ENCODE measurements at regions of chr13 and their contacts with region 1.

Region 1: GRCh38 chr13:91946498-91947070 is 548.2 kb downstream of the GPC5 start:
- DNase-seq: peak; percentile 44
- ATAC-seq: peak; percentile 82
- H3K4me3 ChIP-seq: no peak overlapping the region
- H3K27ac ChIP-seq: no peak overlapping the region
- H3K4me1 ChIP-seq: no peaks in the 10 kb centered on the region
- H3K27me3 ChIP-seq: no peaks in the 10 kb centered on the region
- CTCF ChIP-seq: peak; percentile 70
- EP300 ChIP-seq: no peak
- POLR2A ChIP-seq: no peak
- RAD21 ChIP-seq: no peak

Region 2: DNA sequence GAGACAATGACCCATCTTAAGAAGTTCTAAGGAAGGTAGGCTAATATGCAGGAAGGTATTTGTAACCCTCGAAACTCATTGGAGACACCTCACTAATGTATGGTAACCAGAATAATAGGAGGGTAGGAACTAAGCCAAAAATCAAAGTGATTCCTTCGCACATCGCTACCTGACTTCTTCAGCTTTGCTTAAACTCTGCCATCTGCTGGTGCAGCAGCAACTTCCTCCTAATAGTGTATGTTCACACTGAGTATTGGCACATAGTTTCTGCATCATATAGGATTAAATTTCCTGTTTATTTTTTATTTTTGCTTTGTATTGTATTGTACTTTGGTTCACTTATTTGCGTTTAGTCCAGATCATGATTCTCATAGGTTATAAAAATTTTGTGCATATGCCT is 128.1 kb after region 1 on chr13:
- CTCF ChIA-PET with region 1: interaction called, 21 read pairs
- POLR2A ChIA-PET with region 1: no interaction called
- in situ Hi-C with region 1: loop called (anchors 10 kb)
- intact Hi-C with region 1: loop called (anchors 1 kb)
- DNase-seq: peak; percentile 28
- ATAC-seq: peak; percentile 82
- H3K4me3 ChIP-seq: no peak overlapping the region
- H3K27ac ChIP-seq: no peak overlapping the region
- H3K4me1 ChIP-seq: no peaks in the 10 kb centered on the region
- H3K27me3 ChIP-seq: no peaks in the 10 kb centered on the region; a peak in 1 of 5 replicates
- CTCF ChIP-seq: peak; percentile 55
- EP300 ChIP-seq: no peak
- POLR2A ChIP-seq: no peak
- RAD21 ChIP-seq: no peak; the same call in 1 of the 2 replicates

Region 3: DNA sequence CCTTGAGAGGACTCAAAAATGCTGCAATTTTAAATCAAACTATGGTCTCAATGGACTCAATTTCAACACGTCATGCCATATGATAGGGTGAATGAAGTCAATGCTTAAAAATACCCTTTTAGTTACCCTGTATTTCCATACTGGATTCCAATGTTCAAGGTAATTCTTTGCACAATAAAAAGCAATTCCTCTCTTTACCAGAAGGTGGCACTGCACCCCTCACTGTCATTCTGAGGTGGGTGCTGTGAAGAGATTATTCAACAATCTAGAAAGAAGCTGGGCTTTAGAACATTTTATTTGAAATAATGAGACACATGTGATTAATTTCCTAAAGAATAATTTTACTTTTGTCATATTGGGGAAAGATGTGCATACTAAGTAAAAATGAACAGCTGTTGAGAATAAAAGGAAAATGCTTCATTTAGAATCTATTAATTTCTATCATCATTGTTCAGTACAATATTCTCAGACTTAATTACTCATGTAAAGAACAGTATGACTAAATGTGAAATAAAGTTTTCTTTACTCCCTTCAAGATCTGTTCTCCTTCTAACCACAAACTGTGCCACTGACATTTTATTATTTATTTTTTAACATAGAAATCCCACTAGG is 240.9 kb after region 1 on chr13:
- CTCF ChIA-PET with region 1: no interaction called
- POLR2A ChIA-PET with region 1: no interaction called
- in situ Hi-C with region 1: no loop called
- intact Hi-C with region 1: loop called (anchors 10 kb)
- DNase-seq: peak; percentile 24
- ATAC-seq: peak; percentile 76
- H3K4me3 ChIP-seq: no peak overlapping the region
- H3K27ac ChIP-seq: no peak overlapping the region
- H3K4me1 ChIP-seq: no peaks in the 10 kb centered on the region
- H3K27me3 ChIP-seq: no peaks in the 10 kb centered on the region
- CTCF ChIP-seq: peak; percentile 74
- EP300 ChIP-seq: no peak
- POLR2A ChIP-seq: no peak
- RAD21 ChIP-seq: no peak

Region 4: GRCh38 chr13:92355213-92355612 is 408.6 kb after region 1 on chr13:
- CTCF ChIA-PET with region 1: no interaction called
- POLR2A ChIA-PET with region 1: no interaction called
- in situ Hi-C with region 1: no loop called
- intact Hi-C with region 1: loop called (anchors 10 kb)
- DNase-seq: peak; percentile 10
- ATAC-seq: peak; percentile 78
- H3K4me3 ChIP-seq: no peak overlapping the region
- H3K27ac ChIP-seq: no peak overlapping the region
- H3K4me1 ChIP-seq: no peaks in the 10 kb centered on the region
- H3K27me3 ChIP-seq: no peaks in the 10 kb centered on the region
- CTCF ChIP-seq: no peak
- EP300 ChIP-seq: no peak
- POLR2A ChIP-seq: no peak
- RAD21 ChIP-seq: no peak